ENCODE measurements at regions of chr10 and their contacts with region 1.

Region 1: GRCh38 chr10:117496616-117497028 is 45.9 kb upstream of the EMX2 start:
- DNase-seq: peak; percentile 70 to 85
- ATAC-seq: peak; percentile 88 to 97 (median 91)
- H3K4me3 ChIP-seq: no peak overlapping the region
- H3K27ac ChIP-seq: no peak overlapping the region
- H3K4me1 ChIP-seq: no peaks in the 10 kb centered on the region
- H3K27me3 ChIP-seq: peaks cover 0 to 9% (median 0%) of the 10 kb centered on the region in 3 donors
- CTCF ChIP-seq: peak; percentile 96

Region 2: DNA sequence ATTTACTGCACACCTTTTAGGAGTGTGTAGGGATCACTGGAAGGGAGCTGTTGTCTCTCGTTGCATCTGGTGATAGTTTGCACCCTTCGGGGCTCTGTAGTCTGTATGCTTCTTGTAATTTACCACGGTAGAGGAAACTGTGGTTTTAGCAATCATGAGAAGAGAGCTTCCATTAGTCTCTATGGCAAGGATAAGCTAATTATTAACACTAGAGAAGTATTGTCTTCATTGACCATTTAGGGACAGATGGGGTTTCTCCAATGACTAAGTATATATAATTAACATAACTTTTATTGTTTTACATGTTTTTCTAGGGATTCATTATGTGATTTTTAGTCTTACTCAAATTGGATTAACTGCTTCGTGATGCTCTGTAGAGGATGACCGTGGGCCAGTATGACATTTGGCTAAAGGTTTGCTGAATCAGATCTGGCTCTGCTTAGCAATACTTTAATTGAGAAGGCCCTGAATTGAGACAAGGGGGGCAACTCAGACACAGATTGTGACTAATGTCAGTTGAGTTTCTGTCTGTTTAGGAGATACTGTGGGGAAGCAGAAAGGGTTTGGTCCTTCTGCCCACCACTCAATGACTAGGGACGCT is 247.0 kb before region 1 on chr10:
- intact Hi-C with region 1: no loop called
- DNase-seq: no peak
- ATAC-seq: no peak
- H3K4me3 ChIP-seq: no peak overlapping the region
- H3K27ac ChIP-seq: no peak overlapping the region
- H3K4me1 ChIP-seq: no peaks in the 10 kb centered on the region
- H3K27me3 ChIP-seq: peaks cover 7 to 21% (median 8%) of the 10 kb centered on the region in 3 donors
- CTCF ChIP-seq: no peak

Region 3: GRCh38 chr10:117320050-117320665 is 176.5 kb before region 1 on chr10:
- intact Hi-C with region 1: no loop called
- DNase-seq: no peak
- ATAC-seq: peak in 1 of 4 donors; percentile 56
- H3K4me3 ChIP-seq: no peak overlapping the region
- H3K27ac ChIP-seq: no peak overlapping the region
- H3K4me1 ChIP-seq: no peaks in the 10 kb centered on the region
- H3K27me3 ChIP-seq: no peaks in the 10 kb centered on the region
- CTCF ChIP-seq: peak; percentile 45

Region 4: DNA sequence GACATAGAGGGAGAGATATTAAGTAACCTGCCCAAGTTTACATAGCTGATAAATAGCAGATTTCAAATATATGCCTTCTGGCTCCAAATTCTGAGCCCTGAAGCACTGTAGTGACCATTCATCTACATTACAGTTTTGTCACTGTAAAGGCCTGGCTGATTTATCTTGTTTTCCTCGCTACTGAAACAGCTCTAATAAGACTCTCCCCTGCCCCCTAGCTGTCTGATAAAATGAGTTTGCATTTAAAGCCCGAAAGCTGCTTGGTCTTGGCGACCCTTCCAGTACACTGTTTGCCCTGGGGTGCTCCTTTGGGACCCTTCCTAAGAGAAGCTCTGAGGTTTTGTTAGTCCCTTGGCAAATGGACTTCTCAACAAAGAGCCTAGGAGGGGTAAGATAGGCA is 609.8 kb after region 1 on chr10:
- intact Hi-C with region 1: loop called in 1 of 2 experiments (anchors 5 kb)
- DNase-seq: no peak
- ATAC-seq: no peak
- H3K4me3 ChIP-seq: no peak overlapping the region
- H3K27ac ChIP-seq: no peak overlapping the region
- H3K4me1 ChIP-seq: no peaks in the 10 kb centered on the region
- H3K27me3 ChIP-seq: no peaks in the 10 kb centered on the region
- CTCF ChIP-seq: peak; percentile 30

Region 5: DNA sequence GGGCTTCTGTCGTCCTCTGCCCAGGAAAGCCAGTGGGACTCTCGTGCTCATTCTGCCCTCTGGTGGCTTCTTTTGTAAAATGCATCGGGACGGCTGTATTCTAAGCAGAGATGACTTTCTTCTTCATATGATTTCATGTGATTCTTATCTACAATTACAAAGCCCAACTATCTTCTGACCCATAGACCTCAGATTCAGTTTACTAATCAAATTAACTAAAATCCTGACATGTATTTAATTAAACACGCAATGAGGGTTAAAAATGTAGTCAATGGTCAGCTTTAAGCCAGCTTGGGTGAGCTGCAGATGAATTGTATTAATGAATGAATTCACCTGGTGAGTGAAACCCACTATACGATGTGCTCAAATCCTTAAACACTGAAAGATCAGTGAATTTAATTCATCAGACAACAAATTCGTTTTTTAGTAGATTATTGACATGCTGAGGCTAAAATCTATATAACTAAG is 963.1 kb after region 1 on chr10:
- intact Hi-C with region 1: loop called (anchors 5 to 10 kb)
- DNase-seq: peak; percentile 27 to 55
- ATAC-seq: peak; percentile 61 to 81 (median 70)
- H3K4me3 ChIP-seq: no peak overlapping the region
- H3K27ac ChIP-seq: no peak overlapping the region
- H3K4me1 ChIP-seq: no peaks in the 10 kb centered on the region
- H3K27me3 ChIP-seq: no peaks in the 10 kb centered on the region
- CTCF ChIP-seq: peak; percentile 68